ENCODE measurements at regions of chr3 and their contacts with region 1.

Region 1: GRCh38 chr3:39288300-39288808 is 8.5 kb upstream of the CX3CR1 start:
- DNase-seq: peak; percentile 77 to 82 (median 79)
- H3K4me3 ChIP-seq: no peak overlapping the region
- H3K4me3 Mint-ChIP-seq: peak overlapping the region in 1 of 8 donors; percentile 46
- H3K27ac ChIP-seq: peak overlapping the region; percentile 14
- H3K27ac Mint-ChIP-seq: peak overlapping the region in 6 of 7 donors; percentile 24 to 88 (median 66)
- H3K4me1 ChIP-seq: peaks cover 9% of the 10 kb centered on the region
- H3K4me1 Mint-ChIP-seq: peaks cover 17 to 41% (median 30%) of the 10 kb centered on the region in 4 donors
- H3K27me3 ChIP-seq: no peaks in the 10 kb centered on the region
- H3K27me3 Mint-ChIP-seq: no peaks in the 10 kb centered on the region

Region 2: GRCh38 chr3:38311476-38311875 is 976.9 kb before region 1 on chr3:
- CTCF ChIA-PET with region 1: no interaction called
- POLR2A ChIA-PET with region 1: no interaction called
- intact Hi-C with region 1: no loop called
- DNase-seq: no peak
- H3K4me3 ChIP-seq: no peak overlapping the region
- H3K4me3 Mint-ChIP-seq: no peak overlapping the region
- H3K27ac ChIP-seq: no peak overlapping the region
- H3K27ac Mint-ChIP-seq: no peak overlapping the region
- H3K4me1 ChIP-seq: no peaks in the 10 kb centered on the region
- H3K4me1 Mint-ChIP-seq: peaks cover 0 to 3% (median 0%) of the 10 kb centered on the region in 4 donors
- H3K27me3 ChIP-seq: no peaks in the 10 kb centered on the region
- H3K27me3 Mint-ChIP-seq: peaks cover 6 to 7% of the 10 kb centered on the region in 2 donors

Region 3: DNA sequence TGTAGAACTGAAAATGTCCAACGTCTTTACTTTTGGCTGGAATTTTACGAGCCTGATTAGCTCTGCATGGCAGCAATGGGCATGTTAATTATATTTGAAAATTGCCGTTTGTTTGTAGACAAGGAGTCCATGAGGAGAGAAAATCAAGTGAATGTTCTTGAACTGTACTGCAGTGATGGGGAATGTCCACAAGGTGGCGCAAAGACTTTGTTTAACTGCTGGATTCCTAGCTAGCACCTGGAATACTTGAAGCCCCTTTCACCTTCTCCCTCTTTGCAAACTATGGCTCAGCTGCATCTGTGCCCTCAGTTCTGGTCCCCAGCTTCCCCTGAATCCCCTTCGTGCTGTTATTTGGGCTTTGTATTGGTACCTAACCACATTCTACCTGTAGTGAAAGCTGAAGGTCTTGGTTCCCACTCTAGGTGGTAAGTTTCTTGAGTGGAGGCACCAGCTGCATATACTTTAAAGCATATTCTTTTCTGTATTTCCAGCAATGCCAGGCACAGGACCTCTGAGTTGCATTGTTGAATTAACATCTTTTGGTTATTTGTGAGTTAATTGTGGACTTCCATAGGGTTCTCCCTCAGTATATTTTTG is 766.9 kb before region 1 on chr3:
- CTCF ChIA-PET with region 1: interaction called, 10 read pairs
- POLR2A ChIA-PET with region 1: no interaction called
- intact Hi-C with region 1: no loop called
- DNase-seq: peak; percentile 54 to 63 (median 61)
- H3K4me3 ChIP-seq: no peak overlapping the region
- H3K4me3 Mint-ChIP-seq: peak overlapping the region in 3 of 8 donors; percentile 3 to 75 (median 41)
- H3K27ac ChIP-seq: no peak overlapping the region
- H3K27ac Mint-ChIP-seq: peak overlapping the region in 6 of 7 donors; percentile 43 to 87 (median 62)
- H3K4me1 ChIP-seq: peaks cover 31% of the 10 kb centered on the region
- H3K4me1 Mint-ChIP-seq: peaks cover 27 to 36% (median 33%) of the 10 kb centered on the region in 4 donors
- H3K27me3 ChIP-seq: no peaks in the 10 kb centered on the region
- H3K27me3 Mint-ChIP-seq: no peaks in the 10 kb centered on the region

Region 4: GRCh38 chr3:39090922-39091321 is 197.4 kb before region 1 on chr3:
- CTCF ChIA-PET with region 1: interaction called, 170 read pairs
- POLR2A ChIA-PET with region 1: no interaction called
- intact Hi-C with region 1: no loop called
- DNase-seq: no peak
- H3K4me3 ChIP-seq: no peak overlapping the region
- H3K4me3 Mint-ChIP-seq: no peak overlapping the region
- H3K27ac ChIP-seq: no peak overlapping the region
- H3K27ac Mint-ChIP-seq: peak overlapping the region in 2 of 7 donors; percentile 22 to 29
- H3K4me1 ChIP-seq: no peaks in the 10 kb centered on the region
- H3K4me1 Mint-ChIP-seq: no peaks in the 10 kb centered on the region
- H3K27me3 ChIP-seq: no peaks in the 10 kb centered on the region
- H3K27me3 Mint-ChIP-seq: no peaks in the 10 kb centered on the region

Region 5: DNA sequence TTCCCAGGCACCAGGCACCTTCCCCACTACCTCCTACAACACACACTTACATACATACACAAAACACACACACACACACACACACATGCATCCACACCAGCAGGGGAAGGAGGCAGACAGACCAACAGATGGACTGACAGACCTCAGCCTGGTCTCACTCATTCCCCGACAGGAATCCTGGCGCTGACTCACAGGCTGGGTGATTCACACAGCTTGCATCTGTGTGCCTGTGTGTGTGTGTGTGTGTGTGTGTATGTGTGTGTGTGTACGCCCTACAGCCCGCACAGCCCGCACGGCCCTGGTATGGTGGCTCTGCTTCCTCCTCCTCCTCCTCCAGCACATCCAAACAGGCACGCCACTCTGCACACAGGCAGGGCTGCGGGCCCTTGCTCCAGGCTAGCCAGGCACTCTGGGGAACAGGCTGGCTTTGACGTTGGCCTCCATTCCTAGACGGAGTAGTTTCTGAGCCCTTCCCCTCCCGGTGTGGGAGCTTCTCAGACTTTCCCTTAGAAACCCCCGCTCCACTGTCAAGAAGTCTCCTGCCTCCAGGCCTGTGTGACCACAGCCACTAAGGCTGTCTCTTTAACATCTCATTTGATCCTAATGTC is 141.3 kb before region 1 on chr3:
- CTCF ChIA-PET with region 1: interaction called, 16 read pairs
- POLR2A ChIA-PET with region 1: no interaction called
- intact Hi-C with region 1: no loop called
- DNase-seq: peak in 3 of 5 donors; percentile 48 to 85 (median 57)
- H3K4me3 ChIP-seq: peak overlapping the region; percentile 25 to 26
- H3K4me3 Mint-ChIP-seq: peak overlapping the region; percentile 79 to 99 (median 86)
- H3K27ac ChIP-seq: peak overlapping the region; percentile 69
- H3K27ac Mint-ChIP-seq: peak overlapping the region; percentile 97 to 100 (median 99)
- H3K4me1 ChIP-seq: peaks cover 63% of the 10 kb centered on the region
- H3K4me1 Mint-ChIP-seq: peaks cover 57 to 94% (median 68%) of the 10 kb centered on the region in 4 donors
- H3K27me3 ChIP-seq: no peaks in the 10 kb centered on the region
- H3K27me3 Mint-ChIP-seq: no peaks in the 10 kb centered on the region

Region 6: GRCh38 chr3:39208463-39209055 is 79.8 kb before region 1 on chr3:
- CTCF ChIA-PET with region 1: interaction called, 100 read pairs
- POLR2A ChIA-PET with region 1: interaction called, 3 read pairs
- intact Hi-C with region 1: loop called (anchors 1 kb)
- DNase-seq: peak in 4 of 5 donors; percentile 27 to 39 (median 32)
- H3K4me3 ChIP-seq: no peak overlapping the region
- H3K4me3 Mint-ChIP-seq: no peak overlapping the region
- H3K27ac ChIP-seq: no peak overlapping the region
- H3K27ac Mint-ChIP-seq: no peak overlapping the region
- H3K4me1 ChIP-seq: peaks cover 12% of the 10 kb centered on the region
- H3K4me1 Mint-ChIP-seq: peaks cover 0 to 7% (median 5%) of the 10 kb centered on the region in 4 donors
- H3K27me3 ChIP-seq: no peaks in the 10 kb centered on the region
- H3K27me3 Mint-ChIP-seq: peaks cover 4% of the 10 kb centered on the region in 2 donors

Region 7: DNA sequence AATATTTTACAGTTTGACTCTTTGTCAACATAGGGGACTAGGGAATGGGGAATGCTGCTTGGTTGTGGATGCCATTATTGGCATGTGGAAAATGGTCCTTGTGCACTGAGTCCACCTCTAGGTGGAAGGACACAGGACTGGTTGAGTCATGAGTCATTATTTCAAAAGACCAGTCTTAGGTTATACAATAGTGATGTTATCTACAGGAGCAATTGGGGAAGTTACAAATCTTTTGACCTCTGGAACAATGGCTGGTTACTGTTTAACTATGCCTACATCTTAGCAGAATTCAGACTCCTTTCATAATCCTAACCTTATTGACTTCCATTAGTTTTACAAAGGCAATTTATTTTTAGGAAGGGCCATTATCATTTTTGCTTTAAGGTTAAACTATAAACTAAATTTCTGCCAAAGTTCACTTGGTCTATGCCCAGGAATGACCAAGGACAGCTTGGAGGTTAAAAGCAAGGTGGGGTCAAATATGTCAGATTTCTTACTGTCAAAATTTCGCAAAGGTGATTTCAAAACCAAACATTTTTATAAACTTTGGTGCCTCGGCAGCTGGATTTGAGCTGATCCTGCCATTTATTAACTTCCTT is 29.3 kb after region 1 on chr3:
- CTCF ChIA-PET with region 1: interaction called, 13 read pairs
- POLR2A ChIA-PET with region 1: no interaction called
- intact Hi-C with region 1: no loop called
- DNase-seq: no peak
- H3K4me3 ChIP-seq: no peak overlapping the region
- H3K4me3 Mint-ChIP-seq: no peak overlapping the region
- H3K27ac ChIP-seq: no peak overlapping the region
- H3K27ac Mint-ChIP-seq: no peak overlapping the region
- H3K4me1 ChIP-seq: peaks cover 15% of the 10 kb centered on the region
- H3K4me1 Mint-ChIP-seq: peaks cover 9 to 17% (median 10%) of the 10 kb centered on the region in 4 donors
- H3K27me3 ChIP-seq: no peaks in the 10 kb centered on the region
- H3K27me3 Mint-ChIP-seq: no peaks in the 10 kb centered on the region

Measured in CD4-positive, alpha-beta memory T cell (primary cell).